ENCODE measurements at regions of chr7 and their contacts with region 1.

Region 1: GRCh38 chr7:110043519-110043918 is 1047.4 kb upstream of the LRRN3 start:
- DNase-seq: no peak
- ATAC-seq: no peak
- H3K4me3 ChIP-seq: no peak overlapping the region
- H3K27ac ChIP-seq: no peak overlapping the region
- H3K4me1 ChIP-seq: no peaks in the 10 kb centered on the region
- H3K27me3 ChIP-seq: no peaks in the 10 kb centered on the region
- CTCF ChIP-seq: no peak
- POLR2A ChIP-seq: no peak

Region 2: DNA sequence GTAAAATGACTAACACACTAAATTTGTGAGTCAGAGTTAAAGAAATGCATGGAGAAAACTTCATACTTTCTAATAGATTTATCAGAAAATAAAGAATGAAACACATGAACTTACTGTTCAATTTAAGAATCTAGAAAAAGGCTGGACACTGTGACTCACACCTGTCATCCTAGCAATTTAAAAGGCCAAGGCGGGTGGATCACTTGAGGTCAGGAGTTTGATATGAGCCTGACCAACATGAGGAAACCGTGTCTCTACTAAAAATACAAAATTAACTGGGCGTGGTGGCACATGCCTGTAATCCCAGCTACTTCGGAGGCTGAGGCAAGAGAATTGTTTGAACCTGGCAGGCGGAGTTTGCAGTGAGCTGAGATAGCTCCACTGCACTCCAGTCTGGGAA is 58.8 kb before region 1 on chr7:
- intact Hi-C with region 1: loop called in 1 of 10 experiments (anchors 10 kb)
- DNase-seq: no peak
- ATAC-seq: no peak
- H3K4me3 ChIP-seq: no peak overlapping the region
- H3K27ac ChIP-seq: no peak overlapping the region
- H3K4me1 ChIP-seq: no peaks in the 10 kb centered on the region
- H3K27me3 ChIP-seq: no peaks in the 10 kb centered on the region
- CTCF ChIP-seq: no peak
- POLR2A ChIP-seq: no peak